Activated T-helper 1 cell treated with anti-CD3 and anti-CD28 coated beads, Interleukin-12 subunit alpha, Interleukin-12 subunit beta, Interleukin-2, Interleukin-4 antibody, amounts not matched to agents 30 ng/mL and 10 ng/mL and 1 ng/mL, durations not matched to agents 14 hours and 24 hours and 36 hours (primary cell): ENCODE measurements at regions of chr2 and their contacts with region 1.

Region 1: DNA sequence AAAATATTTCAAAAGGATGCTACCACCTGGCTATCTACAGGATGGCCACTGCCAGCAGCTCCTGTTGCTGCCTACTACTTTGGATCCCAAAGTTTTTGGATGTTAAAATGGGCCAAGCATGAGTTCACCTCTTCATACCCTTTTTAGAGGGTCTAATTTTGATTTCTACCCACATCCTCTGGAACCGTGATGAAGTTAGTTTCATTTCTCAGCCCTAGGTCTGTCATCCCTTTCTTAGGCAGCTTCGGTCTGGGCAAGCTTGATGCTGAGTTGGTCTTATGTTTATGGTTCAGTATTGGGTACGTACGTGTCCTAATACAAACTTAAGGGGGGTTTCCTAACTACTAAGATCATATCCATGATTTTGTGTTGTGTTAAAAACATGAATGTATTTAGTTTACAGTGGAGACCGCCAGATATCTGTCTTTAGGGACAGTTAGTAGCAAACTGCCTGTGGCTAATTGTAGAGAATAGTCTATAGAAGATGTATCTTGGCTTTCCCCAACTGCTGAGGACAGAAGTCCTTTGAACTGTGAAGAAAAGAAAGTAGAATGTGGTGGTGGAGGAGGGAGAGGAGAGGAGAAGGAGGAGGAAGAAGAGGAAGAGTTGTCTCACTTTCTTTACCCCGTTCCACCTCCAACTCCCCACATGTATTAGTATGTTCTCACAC is 184.9 kb downstream of the UBE2E3 start:
- DNase-seq: no peak
- H3K4me3 Mint-ChIP-seq: peak overlapping the region; percentile 67
- H3K27ac Mint-ChIP-seq: peak overlapping the region; percentile 93
- H3K4me1 Mint-ChIP-seq: peaks cover 60% of the 10 kb centered on the region
- H3K27me3 Mint-ChIP-seq: no peaks in the 10 kb centered on the region

Region 2: GRCh38 chr2:179985163-179985820 is 1180.0 kb before region 1 on chr2:
- intact Hi-C with region 1: no loop called
- DNase-seq: no peak
- H3K4me3 Mint-ChIP-seq: no peak overlapping the region
- H3K27ac Mint-ChIP-seq: no peak overlapping the region
- H3K4me1 Mint-ChIP-seq: peaks cover 8% of the 10 kb centered on the region
- H3K27me3 Mint-ChIP-seq: no peaks in the 10 kb centered on the region

Region 3: DNA sequence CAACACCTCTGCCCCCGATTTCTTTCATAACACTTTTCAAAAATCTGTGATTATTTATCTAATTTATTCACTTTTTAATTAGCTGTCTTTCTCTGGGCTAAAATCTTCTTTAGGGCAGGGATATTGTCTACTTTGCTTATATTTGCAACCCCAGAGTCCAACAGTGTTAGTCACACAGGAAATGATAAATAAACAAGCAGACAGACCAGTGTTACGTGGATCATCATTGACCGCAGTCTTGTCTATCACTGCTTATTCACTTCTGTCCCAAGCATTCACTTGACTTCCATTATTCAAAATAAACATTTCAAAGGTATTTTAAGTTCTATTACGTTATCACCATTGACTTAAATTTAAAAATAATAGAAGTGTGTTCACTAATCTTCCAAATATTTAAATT is 422.5 kb before region 1 on chr2:
- intact Hi-C with region 1: no loop called
- DNase-seq: no peak
- H3K4me3 Mint-ChIP-seq: no peak overlapping the region
- H3K27ac Mint-ChIP-seq: no peak overlapping the region
- H3K4me1 Mint-ChIP-seq: no peaks in the 10 kb centered on the region
- H3K27me3 Mint-ChIP-seq: no peaks in the 10 kb centered on the region

Region 4: GRCh38 chr2:181152701-181153100 is 12.6 kb before region 1 on chr2:
- intact Hi-C with region 1: loop called (anchors 1 kb)
- DNase-seq: no peak
- H3K4me3 Mint-ChIP-seq: no peak overlapping the region
- H3K27ac Mint-ChIP-seq: no peak overlapping the region
- H3K4me1 Mint-ChIP-seq: peaks cover 26% of the 10 kb centered on the region
- H3K27me3 Mint-ChIP-seq: no peaks in the 10 kb centered on the region

Region 5: GRCh38 chr2:181178823-181179412 is 13.6 kb after region 1 on chr2:
- intact Hi-C with region 1: loop called (anchors 1 kb)
- DNase-seq: no peak
- H3K4me3 Mint-ChIP-seq: peak overlapping the region; percentile 7
- H3K27ac Mint-ChIP-seq: peak overlapping the region; percentile 57
- H3K4me1 Mint-ChIP-seq: peaks cover 56% of the 10 kb centered on the region
- H3K27me3 Mint-ChIP-seq: no peaks in the 10 kb centered on the region

Region 6: GRCh38 chr2:181197140-181197760 is 31.9 kb after region 1 on chr2:
- intact Hi-C with region 1: loop called (anchors 5 kb)
- DNase-seq: no peak
- H3K4me3 Mint-ChIP-seq: peak overlapping the region; percentile 11
- H3K27ac Mint-ChIP-seq: peak overlapping the region; percentile 73
- H3K4me1 Mint-ChIP-seq: peaks cover 55% of the 10 kb centered on the region
- H3K27me3 Mint-ChIP-seq: no peaks in the 10 kb centered on the region

Region 7: DNA sequence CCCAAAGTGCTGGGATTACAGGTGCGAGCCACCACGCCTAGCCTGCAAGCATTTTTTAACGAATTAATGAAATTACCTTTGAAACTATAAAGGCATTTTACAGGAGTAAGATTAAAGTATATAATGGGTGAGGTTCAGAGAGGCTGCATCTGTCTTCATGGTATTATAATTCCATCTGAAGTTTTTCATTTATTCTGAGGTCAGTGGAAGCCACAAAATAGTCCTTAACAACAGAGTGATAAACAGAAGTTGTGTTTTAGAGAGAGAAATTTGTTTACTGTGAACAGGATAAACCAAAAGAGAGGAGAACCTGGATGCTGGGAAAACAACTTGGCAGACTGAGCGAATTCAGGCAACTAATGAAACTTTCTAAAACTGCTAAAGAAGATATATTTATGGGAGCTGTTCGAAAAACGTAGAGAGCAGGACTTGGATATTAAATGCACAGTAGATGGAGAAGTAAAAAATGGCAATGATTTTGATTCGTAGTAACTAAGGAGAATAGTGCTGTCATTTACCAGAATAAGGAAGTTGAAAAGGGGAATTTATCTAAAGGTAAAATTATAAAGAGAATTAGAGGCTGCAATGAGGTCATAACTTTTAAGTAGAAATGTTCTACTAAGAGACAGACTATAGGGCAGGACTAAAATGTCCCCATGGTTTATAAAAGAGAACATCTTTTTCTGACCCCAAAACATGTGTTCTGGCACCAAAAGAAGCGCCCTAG is 254.0 kb after region 1 on chr2:
- intact Hi-C with region 1: no loop called
- DNase-seq: no peak
- H3K4me3 Mint-ChIP-seq: no peak overlapping the region
- H3K27ac Mint-ChIP-seq: no peak overlapping the region
- H3K4me1 Mint-ChIP-seq: peaks cover 19% of the 10 kb centered on the region
- H3K27me3 Mint-ChIP-seq: no peaks in the 10 kb centered on the region